Psoas muscle (tissue), 8 donors: ENCODE measurements at regions of chr16 and their contacts with region 1.

Region 1: DNA sequence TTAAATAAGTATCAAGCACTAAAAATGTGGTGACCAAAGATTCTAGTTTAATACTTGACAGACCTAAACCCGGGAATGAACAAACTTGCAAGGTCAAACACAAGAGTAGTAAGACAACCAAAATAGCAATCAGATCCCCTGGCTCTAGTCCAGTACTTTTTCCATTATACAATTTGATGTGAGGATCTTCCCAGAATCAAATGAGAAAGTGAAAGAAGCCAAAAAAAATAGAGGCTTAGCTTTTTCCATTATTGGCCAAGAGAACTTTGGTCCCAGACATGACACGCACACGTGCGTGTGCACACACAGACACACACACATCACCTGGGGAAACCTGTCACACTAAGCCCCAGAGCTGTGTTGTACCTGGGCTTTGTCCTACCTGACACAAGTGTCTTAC is 300.6 kb upstream of the CDH5 start:
- DNase-seq: no peak
- ATAC-seq: no peak
- H3K4me3 ChIP-seq: no peak overlapping the region
- H3K27ac ChIP-seq: peak overlapping the region; percentile 50
- H3K4me1 ChIP-seq: peaks cover 17% of the 10 kb centered on the region
- H3K27me3 ChIP-seq: no peaks in the 10 kb centered on the region
- CTCF ChIP-seq: no peak

Region 2: GRCh38 chr16:66007717-66008116 is 58.2 kb before region 1 on chr16:
- intact Hi-C with region 1: no loop called
- DNase-seq: peak in 1 of 2 donors; percentile 44
- ATAC-seq: no peak
- H3K4me3 ChIP-seq: no peak overlapping the region
- H3K27ac ChIP-seq: no peak overlapping the region
- H3K4me1 ChIP-seq: no peaks in the 10 kb centered on the region
- H3K27me3 ChIP-seq: no peaks in the 10 kb centered on the region
- CTCF ChIP-seq: no peak

Region 3: GRCh38 chr16:66127459-66128370 is 61.8 kb after region 1 on chr16:
- intact Hi-C with region 1: loop called in 1 of 2 experiments (anchors 10 kb)
- DNase-seq: peak; percentile 21 to 64
- ATAC-seq: no peak
- H3K4me3 ChIP-seq: no peak overlapping the region
- H3K27ac ChIP-seq: no peak overlapping the region
- H3K4me1 ChIP-seq: no peaks in the 10 kb centered on the region
- H3K27me3 ChIP-seq: peaks cover 0 to 10% (median 0%) of the 10 kb centered on the region in 3 donors
- CTCF ChIP-seq: no peak